ENCODE measurements at regions of chr16 and their contacts with region 1.

Region 1: GRCh38 chr16:30922960-30923535 is 324 bp upstream of the FBXL19 start:
- DNase-seq: peak; percentile 74 to 97 (median 95)
- ATAC-seq: peak; percentile 79
- H3K4me3 ChIP-seq: peak overlapping the region; percentile 72
- H3K4me3 Mint-ChIP-seq: peak overlapping the region; percentile 89 to 100 (median 99)
- H3K27ac ChIP-seq: peak overlapping the region; percentile 91
- H3K27ac Mint-ChIP-seq: peak overlapping the region; percentile 92 to 100 (median 99)
- H3K4me1 ChIP-seq: no peaks in the 10 kb centered on the region
- H3K4me1 Mint-ChIP-seq: peaks cover 0 to 32% (median 15%) of the 10 kb centered on the region in 7 donors
- H3K27me3 ChIP-seq: no peaks in the 10 kb centered on the region
- H3K27me3 Mint-ChIP-seq: peaks cover 0 to 3% (median 0%) of the 10 kb centered on the region in 5 donors

Region 2: DNA sequence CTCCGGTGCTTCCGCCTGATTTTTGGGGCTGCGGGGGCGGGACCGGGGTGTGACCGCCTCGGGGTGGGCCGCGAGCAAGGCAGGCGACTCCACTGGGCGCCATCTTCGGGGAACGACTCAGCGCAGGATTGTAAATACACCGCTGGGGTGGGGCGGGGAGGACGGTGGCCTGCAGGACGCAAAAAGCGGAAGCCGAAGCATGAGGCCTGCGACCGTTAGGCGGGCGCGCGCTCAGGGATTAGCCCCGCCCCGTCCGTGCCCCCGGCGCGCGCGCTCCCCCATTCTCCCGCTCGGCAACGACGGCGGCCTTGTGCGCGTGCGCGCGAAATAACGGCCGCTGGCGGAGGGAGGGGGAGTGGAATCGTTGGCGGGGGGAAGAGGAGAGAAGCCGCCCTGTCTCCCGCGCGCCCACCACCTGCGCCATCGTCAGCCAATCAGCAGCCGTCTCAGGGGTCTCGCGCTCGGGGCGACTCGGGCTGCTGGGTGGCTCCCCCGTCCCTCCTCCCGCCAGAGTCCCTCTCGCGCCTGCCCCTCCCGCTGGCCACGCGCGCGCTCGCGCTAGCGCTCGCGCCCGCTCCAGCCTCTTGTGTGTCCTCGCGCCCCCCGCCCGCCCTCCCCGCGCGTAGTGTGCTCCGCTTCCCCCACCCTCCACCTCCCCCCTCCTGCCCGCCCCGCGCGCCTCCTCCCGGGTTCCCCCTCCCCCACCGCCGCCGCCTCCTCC is 1117.5 kb before region 1 on chr16:
- CTCF ChIA-PET with region 1: no interaction called
- POLR2A ChIA-PET with region 1: no interaction called
- intact Hi-C with region 1: loop called in 1 of 2 experiments (anchors 5 kb)
- DNase-seq: peak; percentile 96 to 98 (median 98)
- ATAC-seq: peak; percentile 86
- H3K4me3 ChIP-seq: peak overlapping the region; percentile 87
- H3K4me3 Mint-ChIP-seq: peak overlapping the region; percentile 88 to 100 (median 98)
- H3K27ac ChIP-seq: peak overlapping the region; percentile 95
- H3K27ac Mint-ChIP-seq: peak overlapping the region; percentile 95 to 100 (median 99)
- H3K4me1 ChIP-seq: peaks cover 34 to 39% of the 10 kb centered on the region in 2 donors
- H3K4me1 Mint-ChIP-seq: peaks cover 28 to 49% (median 41%) of the 10 kb centered on the region in 7 donors
- H3K27me3 ChIP-seq: no peaks in the 10 kb centered on the region
- H3K27me3 Mint-ChIP-seq: peaks cover 0 to 2% (median 0%) of the 10 kb centered on the region in 5 donors

Region 3: DNA sequence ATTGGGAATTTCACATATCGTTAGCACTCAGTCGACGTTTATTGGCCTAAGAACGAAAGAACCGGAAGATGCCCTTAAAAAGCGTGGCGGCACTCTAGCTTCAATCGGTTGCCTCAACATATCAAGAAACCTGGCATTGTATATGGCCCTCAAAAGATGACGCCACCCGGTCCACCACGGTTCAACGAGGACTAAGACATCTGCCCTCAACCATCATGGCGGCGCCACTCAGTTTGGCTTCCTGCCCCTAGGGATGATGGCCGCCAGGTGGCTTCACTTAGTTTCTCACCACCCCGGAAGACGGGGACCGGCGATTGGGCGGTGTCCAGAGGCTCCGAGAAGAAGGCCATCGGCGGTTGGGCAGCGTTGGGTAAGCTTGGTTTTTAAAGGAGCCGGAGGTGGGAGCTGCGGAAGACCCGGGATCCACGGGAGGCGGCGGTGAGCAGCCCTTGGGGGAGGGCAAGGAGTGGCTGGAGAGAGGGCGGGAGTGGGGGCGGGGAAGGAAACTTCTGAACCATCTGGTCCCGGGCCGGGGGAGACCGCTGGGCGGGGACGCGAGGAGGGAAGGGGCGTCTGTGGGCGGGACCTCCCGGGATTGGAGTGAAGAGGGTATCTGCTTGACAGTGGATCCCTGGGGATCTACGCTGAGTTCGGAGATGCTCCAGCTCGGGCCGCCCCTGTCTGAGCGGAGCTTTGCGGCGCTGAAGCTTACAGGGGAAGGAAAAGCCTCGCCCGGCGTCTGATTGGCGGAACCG is 272.5 kb before region 1 on chr16 and contains the start of gene PRR14:
- CTCF ChIA-PET with region 1: no interaction called
- POLR2A ChIA-PET with region 1: interaction called, 3 read pairs
- intact Hi-C with region 1: loop called (anchors 2 kb)
- DNase-seq: peak; percentile 87 to 99 (median 96)
- ATAC-seq: peak; percentile 93
- H3K4me3 ChIP-seq: peak within 1 kb of the TSS; percentile 100
- H3K4me3 Mint-ChIP-seq: peak within 1 kb of the TSS; percentile 86 to 100 (median 98)
- H3K27ac ChIP-seq: peak within 1 kb of the TSS; percentile 90
- H3K27ac Mint-ChIP-seq: peak within 1 kb of the TSS; percentile 95 to 99 (median 98)
- H3K4me1 ChIP-seq: peaks cover 9 to 10% of the 10 kb centered on the region in 2 donors
- H3K4me1 Mint-ChIP-seq: peaks cover 19 to 39% (median 22%) of the 10 kb centered on the region in 7 donors
- H3K27me3 ChIP-seq: no peaks in the 10 kb centered on the region
- H3K27me3 Mint-ChIP-seq: peaks cover 0 to 3% (median 0%) of the 10 kb centered on the region in 5 donors
- total RNA-seq, gene PRR14: 57.6 to 91.9 (median 82.5) TPM

Region 4: DNA sequence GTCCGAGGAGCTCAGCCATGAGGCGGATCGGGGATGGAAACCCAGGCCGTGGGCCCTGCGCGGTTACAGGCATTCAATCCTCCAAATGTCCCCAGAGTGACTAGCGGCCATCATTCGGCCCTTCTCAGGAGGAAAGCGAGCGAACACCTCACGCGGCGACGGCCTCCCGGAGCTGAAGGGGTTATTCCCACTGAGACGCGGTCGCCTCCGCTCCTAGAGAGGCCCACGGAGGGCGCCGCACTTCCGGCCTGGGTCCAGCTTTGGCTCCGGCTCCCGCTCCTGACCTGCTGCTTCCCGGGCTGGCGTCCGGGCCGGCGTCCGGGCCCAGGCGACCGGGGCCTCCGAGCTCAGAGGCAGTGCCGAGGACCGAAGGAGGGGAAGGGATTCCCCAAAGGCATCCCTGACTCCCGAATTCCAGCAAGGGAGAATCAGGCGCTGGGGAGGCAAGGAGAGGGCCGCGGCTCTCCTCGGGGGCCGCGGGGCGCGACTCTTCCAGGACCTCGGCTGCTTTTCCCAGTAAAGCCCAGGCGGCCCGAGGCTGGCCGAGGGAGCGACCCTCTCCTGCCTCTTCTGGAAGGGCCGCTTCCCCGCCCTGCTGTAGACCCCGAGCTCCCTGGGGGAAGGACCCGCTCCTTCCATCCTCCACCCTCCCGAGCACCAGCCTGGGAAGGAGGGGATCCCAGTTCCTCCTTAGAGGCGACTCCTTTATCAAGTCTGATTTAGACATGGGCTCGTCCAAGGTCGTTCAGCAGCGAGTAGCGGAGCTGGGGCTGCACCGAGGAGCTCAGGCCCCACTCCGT is 117.5 kb before region 1 on chr16:
- CTCF ChIA-PET with region 1: interaction called, 3 read pairs
- POLR2A ChIA-PET with region 1: no interaction called
- intact Hi-C with region 1: loop called in 1 of 2 experiments (anchors 1 kb)
- DNase-seq: peak; percentile 32 to 63 (median 52)
- ATAC-seq: peak; percentile 92
- H3K4me3 ChIP-seq: peak overlapping the region; percentile 86
- H3K4me3 Mint-ChIP-seq: peak overlapping the region; percentile 79 to 99 (median 90)
- H3K27ac ChIP-seq: peak overlapping the region; percentile 76
- H3K27ac Mint-ChIP-seq: peak overlapping the region in 8 of 9 donors; percentile 61 to 94 (median 82)
- H3K4me1 ChIP-seq: peaks cover 7 to 10% of the 10 kb centered on the region in 2 donors
- H3K4me1 Mint-ChIP-seq: peaks cover 14 to 31% (median 22%) of the 10 kb centered on the region in 7 donors
- H3K27me3 ChIP-seq: no peaks in the 10 kb centered on the region
- H3K27me3 Mint-ChIP-seq: peaks cover 0 to 24% (median 0%) of the 10 kb centered on the region in 5 donors

Region 5: GRCh38 chr16:30902029-30902972 is 20.7 kb before region 1 on chr16:
- CTCF ChIA-PET with region 1: interaction called, 4 read pairs
- POLR2A ChIA-PET with region 1: interaction called, 5 read pairs
- intact Hi-C with region 1: loop called (anchors 1 kb)
- DNase-seq: peak in 8 of 9 donors; percentile 38 to 76 (median 61)
- ATAC-seq: peak; percentile 92
- H3K4me3 ChIP-seq: peak overlapping the region; percentile 65
- H3K4me3 Mint-ChIP-seq: peak overlapping the region; percentile 91 to 99 (median 96)
- H3K27ac ChIP-seq: peak overlapping the region; percentile 80
- H3K27ac Mint-ChIP-seq: peak overlapping the region; percentile 90 to 99 (median 98)
- H3K4me1 ChIP-seq: peaks cover 26 to 35% of the 10 kb centered on the region in 2 donors
- H3K4me1 Mint-ChIP-seq: peaks cover 18 to 43% (median 32%) of the 10 kb centered on the region in 7 donors
- H3K27me3 ChIP-seq: no peaks in the 10 kb centered on the region
- H3K27me3 Mint-ChIP-seq: no peaks in the 10 kb centered on the region

Region 6: DNA sequence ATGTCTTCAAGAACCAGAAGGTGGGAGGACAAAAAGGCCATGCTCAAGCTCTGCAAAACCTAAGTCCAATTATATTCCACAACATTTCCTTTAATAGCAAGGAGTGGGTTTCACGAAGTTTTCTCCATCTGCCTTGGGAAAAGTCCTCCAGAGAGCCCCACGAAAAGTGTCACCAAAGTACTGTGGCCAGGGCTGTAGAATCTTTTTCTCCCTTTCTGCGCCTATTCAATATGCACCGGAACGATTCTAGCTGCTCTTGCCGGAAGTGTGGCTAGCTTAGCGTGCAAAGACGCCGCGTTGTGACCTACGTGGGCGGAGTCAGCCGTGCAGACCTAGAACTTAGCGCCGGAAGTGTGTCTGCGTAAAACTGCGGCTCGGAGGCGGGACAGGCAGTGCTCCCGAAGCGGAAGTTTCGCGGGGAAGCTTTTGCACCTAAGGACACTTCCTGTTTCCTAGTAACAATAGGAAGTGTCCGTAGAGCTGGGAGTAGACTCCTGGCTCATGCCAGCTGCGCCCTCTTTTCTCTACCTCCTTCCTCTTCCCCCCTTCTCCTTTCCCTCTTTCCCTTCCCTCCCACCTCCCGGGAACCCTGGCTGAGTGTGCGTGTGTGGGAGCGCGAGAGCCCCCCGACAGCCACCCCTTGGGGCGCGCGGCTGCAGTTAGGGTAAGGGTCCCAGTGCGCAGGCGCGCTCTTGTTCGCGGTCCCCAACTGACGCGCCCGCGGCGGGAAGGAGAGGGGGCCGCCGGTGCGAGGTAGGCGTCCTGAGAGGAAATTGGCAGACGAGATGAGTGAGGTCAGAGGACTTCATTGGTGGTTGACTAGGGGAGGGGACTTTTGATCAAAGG is 151.1 kb after region 1 on chr16 and contains the starts of genes ZNF646 and ZNF668:
- CTCF ChIA-PET with region 1: no interaction called
- POLR2A ChIA-PET with region 1: interaction called, 3 read pairs
- intact Hi-C with region 1: loop called (anchors 1 kb)
- DNase-seq: peak; percentile 84 to 99 (median 96)
- ATAC-seq: peak; percentile 90
- H3K4me3 ChIP-seq: peak within 1 kb of the TSS; percentile 89
- H3K4me3 Mint-ChIP-seq: peak within 1 kb of the TSS; percentile 85 to 99 (median 96)
- H3K27ac ChIP-seq: peak within 1 kb of the TSS; percentile 91
- H3K27ac Mint-ChIP-seq: peak within 1 kb of the TSS; percentile 92 to 98 (median 97)
- H3K4me1 ChIP-seq: peaks cover 9 to 18% of the 10 kb centered on the region in 2 donors
- H3K4me1 Mint-ChIP-seq: peaks cover 32 to 48% (median 36%) of the 10 kb centered on the region in 7 donors
- H3K27me3 ChIP-seq: no peaks in the 10 kb centered on the region
- H3K27me3 Mint-ChIP-seq: no peaks in the 10 kb centered on the region
- total RNA-seq, gene ZNF646: 22.2 to 49.1 (median 30.4) TPM
- total RNA-seq, gene ZNF668: 10.7 to 15.2 (median 12.6) TPM

Region 7: DNA sequence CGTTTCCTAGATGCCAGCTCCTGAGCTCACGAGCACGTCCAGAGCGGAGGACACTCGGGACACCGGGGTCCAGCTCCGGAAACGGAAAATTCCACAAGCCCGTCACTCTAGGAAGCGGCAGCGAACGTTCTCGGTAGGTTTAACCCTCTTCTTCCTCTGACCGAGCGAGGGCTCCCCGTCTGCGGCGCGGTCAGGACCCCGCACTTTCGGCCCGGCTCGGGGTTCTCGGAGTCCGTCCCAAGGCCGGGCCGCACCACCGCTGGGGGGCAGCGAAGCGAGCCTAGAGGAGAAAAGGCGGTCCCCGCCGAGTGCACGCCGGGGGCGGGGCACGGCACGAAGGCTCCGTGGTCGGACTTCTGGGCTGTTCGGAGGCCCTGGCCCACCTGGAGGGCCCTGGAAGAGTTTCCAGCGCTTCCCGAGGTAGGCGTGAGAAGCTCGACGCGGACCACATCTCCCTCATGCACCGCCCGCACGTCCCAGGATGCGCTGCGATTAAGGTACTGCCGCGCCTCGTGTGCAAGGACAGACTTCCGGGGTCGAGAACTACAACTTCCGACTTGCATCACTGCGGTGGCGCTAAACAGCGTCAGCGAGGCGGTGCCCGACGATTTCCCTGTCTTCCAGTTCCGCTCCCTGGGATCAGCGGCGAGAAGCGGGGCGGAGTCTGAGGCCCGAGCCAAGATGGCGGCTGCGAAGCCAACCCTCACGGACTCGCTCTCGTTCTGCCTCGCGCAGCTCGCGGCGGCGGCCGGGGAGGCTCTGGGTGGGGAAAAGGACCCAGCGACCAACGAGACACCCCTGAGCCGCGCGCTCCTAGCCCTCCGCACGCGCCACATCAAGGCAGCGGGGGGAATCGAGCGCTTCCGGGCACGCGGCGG is 536.0 kb after region 1 on chr16 and contains the start of gene ARMC5:
- CTCF ChIA-PET with region 1: no interaction called
- POLR2A ChIA-PET with region 1: interaction called, 3 read pairs
- intact Hi-C with region 1: loop called in 1 of 2 experiments (anchors 1 kb)
- DNase-seq: peak in 7 of 9 donors; percentile 92 to 99 (median 98)
- ATAC-seq: peak; percentile 81
- H3K4me3 ChIP-seq: peak within 1 kb of the TSS; percentile 87
- H3K4me3 Mint-ChIP-seq: peak within 1 kb of the TSS; percentile 88 to 96 (median 94)
- H3K27ac ChIP-seq: peak within 1 kb of the TSS; percentile 95
- H3K27ac Mint-ChIP-seq: peak within 1 kb of the TSS; percentile 94 to 99 (median 98)
- H3K4me1 ChIP-seq: peaks cover 32 to 37% of the 10 kb centered on the region in 2 donors
- H3K4me1 Mint-ChIP-seq: peaks cover 26 to 51% (median 46%) of the 10 kb centered on the region in 7 donors
- H3K27me3 ChIP-seq: no peaks in the 10 kb centered on the region
- H3K27me3 Mint-ChIP-seq: no peaks in the 10 kb centered on the region
- total RNA-seq, gene ARMC5: 8.5 to 14.4 (median 11.5) TPM